ENCODE measurements at regions of chr17 and their contacts with region 1.

Region 1: GRCh38 chr17:34146440-34147043 is 108.5 kb upstream of the CCL2 start:
- DNase-seq: peak; percentile 80
- H3K4me3 Mint-ChIP-seq: no peak overlapping the region
- H3K27ac Mint-ChIP-seq: no peak overlapping the region
- H3K4me1 Mint-ChIP-seq: no peaks in the 10 kb centered on the region
- H3K27me3 Mint-ChIP-seq: peaks cover 24% of the 10 kb centered on the region

Region 2: GRCh38 chr17:33779225-33779591 is 367.3 kb before region 1 on chr17:
- CTCF ChIA-PET with region 1: interaction called, 35 read pairs
- intact Hi-C with region 1: loop called (anchors 2 kb)
- DNase-seq: peak; percentile 57
- H3K4me3 Mint-ChIP-seq: no peak overlapping the region
- H3K27ac Mint-ChIP-seq: no peak overlapping the region
- H3K4me1 Mint-ChIP-seq: no peaks in the 10 kb centered on the region
- H3K27me3 Mint-ChIP-seq: peaks cover 20% of the 10 kb centered on the region

Region 3: GRCh38 chr17:34118564-34118963 is 28.0 kb before region 1 on chr17:
- CTCF ChIA-PET with region 1: no interaction called
- intact Hi-C with region 1: no loop called
- DNase-seq: no peak
- H3K4me3 Mint-ChIP-seq: no peak overlapping the region
- H3K27ac Mint-ChIP-seq: no peak overlapping the region
- H3K4me1 Mint-ChIP-seq: no peaks in the 10 kb centered on the region
- H3K27me3 Mint-ChIP-seq: peaks cover 10% of the 10 kb centered on the region